Heart right ventricle (tissue), 16 donors: ENCODE measurements at regions of chr13 and their contacts with region 1.

Region 1: DNA sequence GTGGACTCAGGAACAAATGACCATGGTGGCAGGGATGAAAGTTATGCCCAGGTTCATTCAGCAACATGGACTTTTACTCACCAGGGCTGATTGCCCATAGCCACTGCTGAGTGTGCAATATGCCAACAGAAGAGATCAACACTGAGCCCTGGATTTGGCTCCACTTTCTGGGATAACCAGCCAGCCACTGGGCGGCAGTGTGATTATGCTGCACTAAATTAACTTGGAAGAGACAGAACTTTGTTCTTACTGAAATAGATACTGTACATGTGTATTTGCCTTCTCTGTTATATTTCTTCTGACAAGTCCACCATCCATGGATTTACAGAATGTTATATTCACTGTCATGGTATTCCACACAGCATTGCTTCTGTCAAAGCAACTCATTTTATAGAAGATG is 257.4 kb downstream of the TDRD3 start:
- DNase-seq: peak; percentile 23 to 25
- ATAC-seq: peak in 7 of 8 donors; percentile 58 to 88 (median 74)
- H3K4me3 ChIP-seq: no peak overlapping the region
- H3K27ac ChIP-seq: no peak overlapping the region
- H3K4me1 ChIP-seq: no peaks in the 10 kb centered on the region
- H3K27me3 ChIP-seq: no peaks in the 10 kb centered on the region
- CTCF ChIP-seq: peak; percentile 22 to 69 (median 55)

Region 2: GRCh38 chr13:60671386-60671785 is 17.0 kb after region 1 on chr13:
- intact Hi-C with region 1: no loop called
- DNase-seq: no peak
- ATAC-seq: no peak
- H3K4me3 ChIP-seq: no peak overlapping the region
- H3K27ac ChIP-seq: no peak overlapping the region
- H3K4me1 ChIP-seq: no peaks in the 10 kb centered on the region
- H3K27me3 ChIP-seq: no peaks in the 10 kb centered on the region
- CTCF ChIP-seq: no peak

Region 3: DNA sequence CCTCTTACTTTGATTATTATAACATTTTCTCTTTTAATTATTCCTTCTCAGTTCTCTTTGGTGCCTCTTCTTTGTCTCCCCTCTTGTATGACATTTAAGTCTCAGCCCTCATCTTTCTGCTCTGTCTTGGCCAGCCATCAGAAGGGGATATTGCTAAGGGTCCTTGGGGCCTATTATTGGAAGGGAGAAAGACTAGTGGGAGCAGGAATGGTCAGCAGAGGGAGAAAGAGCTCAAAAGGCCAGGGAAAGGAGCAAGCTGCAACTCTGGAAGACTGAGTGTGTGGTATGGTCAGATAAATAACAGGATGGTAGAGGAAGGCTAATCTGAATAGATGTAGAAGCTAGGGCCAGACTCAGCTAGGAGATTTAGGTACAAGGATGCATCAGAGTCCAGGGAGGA is 79.5 kb after region 1 on chr13:
- intact Hi-C with region 1: no loop called
- DNase-seq: no peak
- ATAC-seq: no peak
- H3K4me3 ChIP-seq: no peak overlapping the region
- H3K27ac ChIP-seq: no peak overlapping the region
- H3K4me1 ChIP-seq: no peaks in the 10 kb centered on the region
- H3K27me3 ChIP-seq: peaks cover 0 to 5% (median 0%) of the 10 kb centered on the region in 7 donors
- CTCF ChIP-seq: no peak

Region 4: GRCh38 chr13:61255035-61255796 is 600.8 kb after region 1 on chr13:
- intact Hi-C with region 1: loop called in 3 of 10 experiments (anchors 2 to 10 kb)
- DNase-seq: no peak
- ATAC-seq: no peak
- H3K4me3 ChIP-seq: no peak overlapping the region
- H3K27ac ChIP-seq: no peak overlapping the region
- H3K4me1 ChIP-seq: no peaks in the 10 kb centered on the region
- H3K27me3 ChIP-seq: no peaks in the 10 kb centered on the region
- CTCF ChIP-seq: peak in 3 of 9 donors; percentile 4 to 14 (median 9)

Region 5: DNA sequence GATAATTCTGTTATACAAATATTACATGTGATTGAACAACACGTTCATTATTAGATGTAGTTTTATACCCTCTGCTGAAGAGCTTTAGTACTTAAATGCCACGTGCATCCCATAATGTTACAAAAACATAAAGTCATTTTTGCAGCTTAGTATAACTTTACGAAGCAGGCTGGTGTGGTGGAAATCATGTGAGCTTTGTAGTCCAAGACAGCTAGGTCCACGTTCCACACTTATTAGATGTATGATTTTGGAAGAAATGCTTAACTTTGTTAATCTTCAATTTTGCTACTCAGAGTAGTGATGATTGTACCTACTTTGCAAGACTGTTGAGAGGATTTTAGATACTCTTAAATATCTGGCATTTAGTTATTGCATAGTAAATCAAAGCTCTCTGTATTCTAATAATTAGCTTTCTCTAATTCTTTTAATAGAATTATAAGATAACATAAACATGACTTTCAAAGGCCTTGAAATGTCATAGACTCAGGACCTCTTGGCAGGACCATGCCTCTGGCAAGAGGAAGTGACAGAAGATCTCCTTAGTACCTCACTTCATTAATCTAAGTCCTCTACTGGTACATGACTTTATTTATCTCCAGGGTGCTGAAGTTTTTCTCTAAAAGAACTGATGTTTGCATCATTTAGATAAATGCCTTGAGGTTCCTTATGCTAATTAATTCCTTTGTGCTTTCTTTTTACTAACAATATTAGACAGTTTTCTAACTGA is 607.5 kb after region 1 on chr13:
- intact Hi-C with region 1: loop called in 3 of 10 experiments (anchors 2 to 10 kb)
- DNase-seq: no peak
- ATAC-seq: peak in 1 of 8 donors; percentile 45
- H3K4me3 ChIP-seq: no peak overlapping the region
- H3K27ac ChIP-seq: no peak overlapping the region
- H3K4me1 ChIP-seq: no peaks in the 10 kb centered on the region
- H3K27me3 ChIP-seq: no peaks in the 10 kb centered on the region
- CTCF ChIP-seq: no peak

Region 6: DNA sequence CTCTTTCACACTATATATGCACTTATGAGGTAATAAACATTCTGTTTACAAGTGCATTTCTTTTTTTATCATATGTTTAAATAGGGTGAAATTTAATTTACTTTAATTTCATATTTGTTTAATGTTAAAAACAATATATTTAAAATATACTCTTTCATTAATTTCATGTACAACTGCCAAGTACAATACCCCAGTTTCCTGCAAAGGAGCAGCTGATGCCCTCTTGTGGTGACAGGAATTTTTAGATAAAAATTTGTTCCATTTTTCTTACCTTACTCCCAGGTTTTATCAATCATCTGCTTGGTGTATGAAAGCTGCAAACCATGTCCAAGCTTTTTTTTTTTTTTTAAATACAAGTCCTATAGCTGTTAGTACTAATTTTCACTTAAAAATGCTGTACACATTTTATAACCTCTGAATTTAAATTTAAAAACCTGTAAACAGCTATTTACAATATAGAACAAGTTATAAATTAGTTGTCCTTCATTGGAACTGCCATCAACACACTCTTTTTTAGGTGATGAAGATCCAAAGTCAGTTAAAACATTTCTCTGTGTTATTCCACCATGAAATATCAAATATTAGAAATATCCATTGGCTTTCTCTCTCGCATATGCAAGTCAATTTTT is 756.4 kb after region 1 on chr13:
- intact Hi-C with region 1: loop called in 6 of 10 experiments (anchors 5 to 10 kb)
- DNase-seq: no peak
- ATAC-seq: no peak
- H3K4me3 ChIP-seq: no peak overlapping the region
- H3K27ac ChIP-seq: no peak overlapping the region
- H3K4me1 ChIP-seq: peaks cover 0 to 4% (median 0%) of the 10 kb centered on the region in 9 donors
- H3K27me3 ChIP-seq: peaks cover 0 to 38% (median 30%) of the 10 kb centered on the region in 7 donors
- CTCF ChIP-seq: peak in 8 of 9 donors; percentile 20 to 58 (median 46)